ENCODE measurements at regions of chr20 and their contacts with region 1.

Region 1: DNA sequence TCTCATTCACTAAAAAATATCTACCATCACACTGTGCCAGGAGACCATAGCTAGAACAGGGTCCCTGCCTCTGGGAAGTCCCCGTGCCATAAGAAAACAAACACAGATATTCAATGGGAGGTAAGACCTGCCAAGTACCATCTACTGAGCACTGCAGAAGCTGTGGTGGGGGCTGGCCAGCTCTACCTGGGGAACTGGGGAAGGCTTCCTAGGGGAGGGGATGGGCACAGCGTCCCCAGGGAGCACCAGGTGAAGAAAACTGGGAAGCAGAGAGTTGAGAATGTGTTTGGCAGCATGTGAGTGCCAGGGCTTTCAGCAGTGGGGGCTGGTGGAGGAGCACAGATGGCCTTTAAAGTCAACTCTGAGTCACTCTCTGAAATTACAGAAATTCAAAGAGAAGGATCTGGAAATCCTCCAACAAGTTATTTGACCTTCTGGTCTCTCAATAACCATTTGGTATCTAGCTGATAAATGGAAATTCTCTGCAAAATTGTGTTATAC is 85.2 kb downstream of the SHLD1 start:
- DNase-seq: peak in 2 of 9 donors; percentile 5 to 34
- ATAC-seq: peak; percentile 54
- H3K4me3 ChIP-seq: no peak overlapping the region
- H3K4me3 Mint-ChIP-seq: peak overlapping the region in 9 of 10 donors; percentile 51 to 89 (median 69)
- H3K27ac ChIP-seq: peak overlapping the region; percentile 77
- H3K27ac Mint-ChIP-seq: peak overlapping the region; percentile 66 to 99 (median 96)
- H3K4me1 ChIP-seq: peaks cover 15 to 17% of the 10 kb centered on the region in 2 donors
- H3K4me1 Mint-ChIP-seq: peaks cover 19 to 55% (median 36%) of the 10 kb centered on the region in 7 donors
- H3K27me3 ChIP-seq: no peaks in the 10 kb centered on the region
- H3K27me3 Mint-ChIP-seq: no peaks in the 10 kb centered on the region

Region 2: DNA sequence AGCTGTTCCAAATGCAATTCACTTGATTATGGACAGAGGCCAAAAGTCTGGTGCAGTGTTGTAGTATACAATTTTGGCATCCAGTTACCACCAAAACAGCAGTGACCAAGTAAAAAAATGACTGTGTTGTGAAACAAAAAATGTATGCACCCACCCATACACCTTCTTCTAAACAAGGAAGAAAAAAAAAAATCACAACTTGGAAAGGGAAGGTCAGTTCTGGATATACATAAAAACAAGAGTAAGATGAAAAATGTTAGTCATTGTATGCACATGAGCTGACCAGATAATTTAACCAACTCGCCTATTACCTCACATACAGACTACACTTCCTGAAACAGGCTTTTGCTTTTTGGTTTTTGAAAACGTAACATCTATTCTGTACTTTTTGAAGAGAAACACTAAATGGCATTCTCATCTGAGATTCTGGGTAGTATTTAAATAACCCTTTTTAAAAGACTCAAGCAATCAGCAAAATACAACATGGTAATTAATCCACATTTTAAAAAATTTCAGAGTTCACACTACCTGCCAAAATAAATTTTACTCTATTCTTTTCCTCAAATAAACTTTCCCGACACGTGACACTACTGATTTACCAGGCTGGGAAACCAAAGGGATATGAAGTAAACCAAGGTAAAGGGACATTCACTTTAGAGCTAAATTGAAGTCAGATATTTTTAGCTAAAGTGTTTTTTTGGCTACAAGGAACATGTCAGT is 226.8 kb before region 1 on chr20:
- CTCF ChIA-PET with region 1: no interaction called
- POLR2A ChIA-PET with region 1: interaction called, 4 read pairs
- intact Hi-C with region 1: loop called in 1 of 2 experiments (anchors 1 kb)
- DNase-seq: peak in 1 of 9 donors; percentile 17
- ATAC-seq: no peak
- H3K4me3 ChIP-seq: peak overlapping the region; percentile 86
- H3K4me3 Mint-ChIP-seq: peak overlapping the region; percentile 90 to 99 (median 97)
- H3K27ac ChIP-seq: peak overlapping the region; percentile 99
- H3K27ac Mint-ChIP-seq: peak overlapping the region; percentile 96 to 100 (median 99)
- H3K4me1 ChIP-seq: peaks cover 35 to 41% of the 10 kb centered on the region in 2 donors
- H3K4me1 Mint-ChIP-seq: peaks cover 32 to 66% (median 56%) of the 10 kb centered on the region in 7 donors
- H3K27me3 ChIP-seq: no peaks in the 10 kb centered on the region
- H3K27me3 Mint-ChIP-seq: no peaks in the 10 kb centered on the region

Region 3: DNA sequence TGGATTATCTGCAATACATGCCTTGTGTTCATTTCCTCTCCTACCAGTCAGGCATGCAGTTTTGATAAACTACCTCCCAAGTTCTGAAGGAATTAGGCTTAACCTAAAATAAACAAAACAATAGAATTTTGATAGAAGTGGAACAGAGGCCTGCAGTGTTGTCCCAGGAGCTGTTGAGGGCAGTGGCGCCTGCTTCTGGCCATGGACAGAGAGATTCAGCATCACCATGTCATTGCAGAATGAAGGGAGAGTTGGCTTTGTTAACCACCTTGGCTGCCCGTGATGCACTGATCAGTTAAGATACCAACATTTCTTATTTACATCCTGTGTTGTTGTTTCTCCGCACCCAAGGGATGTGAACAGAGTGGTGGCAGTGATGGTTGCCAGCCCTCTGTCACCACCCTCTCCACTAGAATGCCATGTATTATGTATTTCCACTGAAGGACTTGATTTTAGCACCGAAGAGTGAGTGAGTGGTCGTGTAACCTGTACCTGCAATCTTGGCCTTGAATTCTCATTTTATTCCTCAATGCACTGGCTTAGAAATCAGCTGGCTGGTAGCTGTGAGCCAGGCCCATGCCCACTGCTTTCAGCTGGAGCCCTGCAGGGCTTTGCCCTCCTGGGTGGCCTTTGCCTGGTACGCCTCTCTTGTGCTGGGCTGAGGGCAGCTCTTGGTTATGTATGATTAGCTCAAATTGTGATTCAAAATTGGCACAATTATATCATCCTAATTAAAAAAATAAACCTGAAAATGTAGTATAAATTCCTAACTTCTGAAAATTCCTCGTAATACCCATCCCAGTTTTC is 28.7 kb before region 1 on chr20:
- CTCF ChIA-PET with region 1: interaction called, 4 read pairs
- POLR2A ChIA-PET with region 1: interaction called, 5 read pairs
- intact Hi-C with region 1: loop called in 1 of 2 experiments (anchors 1 kb)
- DNase-seq: no peak
- ATAC-seq: no peak
- H3K4me3 ChIP-seq: no peak overlapping the region
- H3K4me3 Mint-ChIP-seq: peak overlapping the region in 1 of 10 donors; percentile 32
- H3K27ac ChIP-seq: no peak overlapping the region
- H3K27ac Mint-ChIP-seq: peak overlapping the region in 4 of 9 donors; percentile 0 to 67 (median 46)
- H3K4me1 ChIP-seq: peaks cover 4 to 19% of the 10 kb centered on the region in 2 donors
- H3K4me1 Mint-ChIP-seq: peaks cover 12 to 49% (median 25%) of the 10 kb centered on the region in 7 donors
- H3K27me3 ChIP-seq: no peaks in the 10 kb centered on the region
- H3K27me3 Mint-ChIP-seq: no peaks in the 10 kb centered on the region

Region 4: GRCh38 chr20:5881714-5882113 is 46.3 kb after region 1 on chr20:
- CTCF ChIA-PET with region 1: no interaction called
- POLR2A ChIA-PET with region 1: no interaction called
- intact Hi-C with region 1: loop called in 1 of 2 experiments (anchors 5 kb)
- DNase-seq: no peak
- ATAC-seq: no peak
- H3K4me3 ChIP-seq: no peak overlapping the region
- H3K4me3 Mint-ChIP-seq: peak overlapping the region in 1 of 10 donors; percentile 1
- H3K27ac ChIP-seq: no peak overlapping the region
- H3K27ac Mint-ChIP-seq: no peak overlapping the region
- H3K4me1 ChIP-seq: no peaks in the 10 kb centered on the region
- H3K4me1 Mint-ChIP-seq: peaks cover 0 to 6% (median 4%) of the 10 kb centered on the region in 7 donors
- H3K27me3 ChIP-seq: no peaks in the 10 kb centered on the region
- H3K27me3 Mint-ChIP-seq: peaks cover 5 to 17% (median 8%) of the 10 kb centered on the region in 5 donors

Region 5: DNA sequence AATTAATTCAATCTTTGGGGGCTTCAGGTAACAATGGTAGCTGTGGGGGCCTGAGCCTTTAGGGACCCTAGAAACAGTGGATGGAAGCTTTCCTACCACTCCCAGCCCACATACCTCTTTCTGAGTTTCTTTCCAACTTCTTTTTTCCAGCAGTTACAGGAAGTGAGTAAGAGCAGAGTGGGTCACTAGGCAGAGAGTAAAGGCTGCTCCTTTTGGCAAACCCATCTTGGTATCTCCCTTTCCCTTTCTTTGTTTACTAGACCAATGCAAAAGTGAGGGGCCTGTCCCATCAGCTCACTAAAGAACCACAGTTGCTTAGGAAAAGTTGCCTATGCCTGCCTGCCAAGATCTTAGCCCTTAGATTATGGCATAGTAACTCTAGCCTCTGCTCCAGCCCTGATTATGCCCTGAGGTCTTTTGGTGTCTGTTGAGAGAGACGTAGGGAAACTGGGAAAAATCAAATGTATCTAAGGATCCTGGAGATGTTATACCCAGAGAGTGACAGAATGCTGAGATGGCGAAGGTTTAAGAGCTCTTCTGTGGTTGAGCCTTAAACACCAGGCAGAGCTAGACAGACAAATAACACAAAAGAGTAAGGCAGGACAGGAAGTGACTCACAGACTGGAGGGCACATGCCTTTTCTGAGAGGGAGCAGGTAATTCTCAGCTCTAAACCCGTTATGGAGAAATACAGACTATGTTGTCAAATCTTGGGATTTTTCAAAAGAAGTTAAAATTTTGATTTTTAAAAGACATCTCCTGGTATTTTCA is 83.7 kb after region 1 on chr20:
- CTCF ChIA-PET with region 1: no interaction called
- POLR2A ChIA-PET with region 1: no interaction called
- intact Hi-C with region 1: no loop called
- DNase-seq: no peak
- ATAC-seq: peak; percentile 65
- H3K4me3 ChIP-seq: no peak overlapping the region
- H3K4me3 Mint-ChIP-seq: no peak overlapping the region
- H3K27ac ChIP-seq: no peak overlapping the region
- H3K27ac Mint-ChIP-seq: peak overlapping the region in 3 of 9 donors; percentile 28 to 47 (median 30)
- H3K4me1 ChIP-seq: peaks cover 0 to 10% of the 10 kb centered on the region in 2 donors
- H3K4me1 Mint-ChIP-seq: peaks cover 0 to 11% (median 6%) of the 10 kb centered on the region in 7 donors
- H3K27me3 ChIP-seq: no peaks in the 10 kb centered on the region
- H3K27me3 Mint-ChIP-seq: peaks cover 15 to 28% (median 25%) of the 10 kb centered on the region in 5 donors

Region 6: DNA sequence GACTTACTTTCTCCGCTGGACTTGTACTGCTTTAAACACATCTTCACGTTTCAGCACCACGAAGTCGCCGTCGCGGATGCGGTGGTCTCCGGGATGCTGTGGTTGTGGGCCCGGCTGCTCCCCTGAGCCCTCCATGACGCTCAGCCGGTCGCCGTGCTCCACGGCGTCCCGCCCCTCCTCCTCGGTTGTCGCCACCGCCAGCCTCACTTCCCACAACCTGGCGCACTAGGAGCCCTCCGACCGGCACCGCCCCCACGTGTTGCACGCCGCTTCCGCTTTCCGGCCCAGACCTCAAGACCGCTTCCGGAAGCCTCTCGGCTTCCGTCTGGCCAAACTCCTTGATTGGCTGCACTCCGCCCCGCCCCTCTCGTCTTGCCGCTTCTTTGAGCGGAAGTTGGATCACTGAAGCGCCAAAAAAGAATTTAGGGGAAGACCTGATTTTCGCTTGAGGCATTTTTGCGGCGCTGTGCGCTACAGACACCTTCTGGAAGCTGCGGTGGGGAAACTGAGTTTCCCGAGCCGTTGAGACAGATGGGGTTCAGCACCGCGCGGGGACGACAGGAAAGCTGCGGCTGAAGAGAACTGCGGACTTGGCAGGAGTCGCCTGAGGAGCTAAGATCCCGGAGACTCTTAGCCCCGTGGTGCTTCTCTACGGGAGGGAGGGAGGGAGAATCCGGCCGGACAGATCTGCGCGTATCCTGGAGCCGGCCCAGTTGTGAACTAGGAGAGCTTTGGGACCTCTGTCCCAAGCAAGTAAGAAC is 115.1 kb after region 1 on chr20 and contains the starts of genes MCM8 and TRMT6:
- CTCF ChIA-PET with region 1: no interaction called
- POLR2A ChIA-PET with region 1: no interaction called
- intact Hi-C with region 1: loop called (anchors 1 kb)
- DNase-seq: peak; percentile 82 to 97 (median 95)
- ATAC-seq: peak; percentile 97
- H3K4me3 ChIP-seq: peak within 1 kb of the TSS; percentile 89
- H3K4me3 Mint-ChIP-seq: peak within 1 kb of the TSS; percentile 91 to 99 (median 96)
- H3K27ac ChIP-seq: peak within 1 kb of the TSS; percentile 82
- H3K27ac Mint-ChIP-seq: peak within 1 kb of the TSS; percentile 91 to 100 (median 97)
- H3K4me1 ChIP-seq: peaks cover 13 to 17% of the 10 kb centered on the region in 2 donors
- H3K4me1 Mint-ChIP-seq: peaks cover 7 to 61% (median 45%) of the 10 kb centered on the region in 7 donors
- H3K27me3 ChIP-seq: no peaks in the 10 kb centered on the region
- H3K27me3 Mint-ChIP-seq: peaks cover 0 to 4% (median 0%) of the 10 kb centered on the region in 5 donors
- total RNA-seq, gene MCM8: 2.6 to 22.7 (median 10.8) TPM
- total RNA-seq, gene TRMT6: 14.5 to 18.5 (median 17.8) TPM